ENCODE measurements at regions of chr19 and their contacts with region 1.

Region 1: GRCh38 chr19:16386614-16387240 is 62.1 kb downstream of the KLF2 start:
- DNase-seq: peak in 3 of 5 donors; percentile 43 to 65 (median 62)
- H3K4me3 ChIP-seq: no peak overlapping the region
- H3K27ac ChIP-seq: no peak overlapping the region
- H3K4me1 ChIP-seq: no peaks in the 10 kb centered on the region
- H3K27me3 ChIP-seq: no peaks in the 10 kb centered on the region
- CTCF ChIP-seq: peak; percentile 52

Region 2: DNA sequence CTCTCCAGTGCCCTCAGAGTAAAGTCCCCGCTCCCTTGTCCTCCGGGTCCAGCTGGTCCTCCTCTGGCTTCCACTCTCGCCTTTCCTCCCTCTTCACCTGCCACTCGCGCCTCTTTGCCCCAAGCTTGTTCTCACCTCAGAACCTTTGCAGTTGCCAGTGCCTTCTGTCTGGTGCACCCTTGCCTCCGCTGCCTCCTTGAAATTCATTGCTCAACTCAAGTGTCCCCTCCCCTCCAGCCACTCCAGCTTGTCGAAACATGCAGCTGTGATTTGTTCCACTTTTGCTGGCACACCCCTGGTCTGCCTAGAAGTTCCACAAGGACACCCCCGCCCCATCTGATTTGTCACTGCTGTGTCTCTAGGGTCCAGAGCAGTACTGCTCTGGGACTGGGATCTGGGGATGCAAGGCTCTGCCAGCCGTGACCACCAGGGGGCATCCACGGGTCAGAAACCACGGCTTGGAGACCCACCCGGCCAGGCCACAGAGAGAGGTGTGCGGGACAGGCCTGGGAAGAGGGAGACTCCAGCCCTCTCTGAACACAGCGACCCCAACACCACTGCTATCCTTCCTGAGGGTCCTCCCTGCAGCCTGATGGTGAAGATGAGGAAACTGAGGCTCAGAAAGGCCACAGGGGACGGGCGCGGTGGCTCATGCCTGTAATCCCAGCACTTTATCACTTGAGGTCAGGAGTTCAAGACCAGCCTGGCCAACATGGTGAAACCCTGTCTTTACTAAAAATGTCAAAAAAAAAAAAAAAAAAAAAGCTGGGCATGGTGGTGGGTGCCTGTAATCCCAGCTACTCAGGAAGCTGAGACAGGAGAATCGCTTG is 139.2 kb before region 1 on chr19:
- intact Hi-C with region 1: loop called (anchors 5 kb)
- DNase-seq: peak; percentile 82 to 93 (median 88)
- H3K4me3 ChIP-seq: no peak overlapping the region
- H3K27ac ChIP-seq: no peak overlapping the region
- H3K4me1 ChIP-seq: peaks cover 0 to 4% (median 0%) of the 10 kb centered on the region in 3 donors
- H3K27me3 ChIP-seq: no peaks in the 10 kb centered on the region
- CTCF ChIP-seq: peak; percentile 94